Mammary epithelial cell (primary cell): ENCODE measurements at regions of chr10 and their contacts with region 1.

Region 1: DNA sequence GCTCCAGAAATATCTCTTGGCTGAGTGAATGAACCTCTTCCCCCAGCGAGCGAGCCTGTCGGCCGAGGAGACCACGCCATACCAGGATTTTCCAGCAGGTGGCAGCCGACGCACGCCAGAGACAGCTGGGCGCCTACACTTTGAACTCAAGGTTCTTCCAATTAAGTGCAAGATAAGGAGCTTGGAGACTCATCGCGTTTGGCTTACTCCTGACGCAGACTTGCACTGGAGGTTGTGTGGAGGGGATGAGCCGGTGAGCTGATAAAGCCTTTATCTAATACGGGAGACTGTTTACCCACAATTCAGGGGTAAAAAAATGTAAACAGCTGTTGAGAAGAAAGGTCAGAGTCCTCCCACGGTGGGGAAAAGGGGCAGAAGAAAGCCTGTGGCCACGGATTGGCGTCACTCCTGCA is 45.9 kb upstream of the EMX2 start:
- DNase-seq: peak; percentile 80
- H3K4me3 ChIP-seq: no peak overlapping the region
- H3K27ac ChIP-seq: no peak overlapping the region
- H3K4me1 ChIP-seq: peaks cover 5% of the 10 kb centered on the region
- H3K27me3 ChIP-seq: peaks cover 5% of the 10 kb centered on the region
- CTCF ChIP-seq: peak; percentile 94 to 97

Region 2: DNA sequence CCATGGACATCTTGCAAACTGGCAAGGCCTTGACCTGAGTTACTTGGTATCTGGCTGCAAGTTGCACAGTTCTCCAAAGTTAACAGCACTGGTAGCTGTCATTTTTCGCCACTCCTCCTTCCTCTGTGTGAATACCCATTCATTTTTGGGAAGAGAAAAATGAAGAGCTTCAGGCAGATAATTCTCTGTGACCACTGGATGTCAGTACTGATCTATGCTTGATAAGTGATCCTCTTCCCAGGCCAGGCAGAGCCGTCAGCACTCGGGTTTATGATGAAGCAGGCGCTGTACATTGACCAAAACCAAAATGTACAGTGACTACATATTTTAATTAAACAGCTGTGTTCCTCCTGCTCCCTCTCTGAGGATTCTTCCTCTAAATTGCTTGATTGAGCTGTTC is 65.5 kb before region 1 on chr10:
- CTCF ChIA-PET with region 1: interaction called, 3 read pairs
- dilution Hi-C with region 1: no loop called
- in situ Hi-C with region 1: no loop called
- intact Hi-C with region 1: loop called (anchors 1 kb)
- DNase-seq: peak; percentile 60
- H3K4me3 ChIP-seq: no peak overlapping the region
- H3K27ac ChIP-seq: no peak overlapping the region
- H3K4me1 ChIP-seq: no peaks in the 10 kb centered on the region
- H3K27me3 ChIP-seq: no peaks in the 10 kb centered on the region
- CTCF ChIP-seq: peak; percentile 39 to 57

Region 3: DNA sequence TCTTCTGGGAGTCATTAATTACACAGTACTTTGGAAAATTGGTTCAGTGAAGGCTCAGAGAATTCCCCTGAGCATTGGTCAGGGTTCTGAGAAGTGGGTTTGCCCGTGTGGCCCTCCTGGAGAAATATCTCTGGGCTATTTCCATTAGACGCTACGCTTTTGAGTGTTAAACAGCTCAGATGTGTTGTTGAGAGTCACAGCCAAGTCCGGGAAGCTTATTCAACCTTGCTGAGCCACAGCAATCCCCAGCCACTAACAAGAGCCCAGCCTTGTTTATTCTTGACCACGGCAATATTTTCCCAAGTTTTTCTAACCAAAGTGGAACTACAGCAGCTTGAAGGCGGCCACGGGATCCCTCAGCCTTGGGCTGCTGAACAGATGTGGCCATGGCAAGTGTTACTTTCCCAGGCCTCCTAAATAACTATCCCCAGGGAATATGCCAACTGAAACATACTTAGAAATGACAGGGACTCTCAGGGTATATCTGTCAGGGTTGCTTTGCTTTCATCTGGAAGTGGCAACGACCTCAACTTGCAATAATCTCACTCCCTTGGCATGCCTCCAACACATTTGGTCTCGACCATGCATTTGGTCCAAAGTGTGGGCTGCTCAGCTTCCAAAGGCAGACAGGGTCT is 260.6 kb after region 1 on chr10:
- CTCF ChIA-PET with region 1: no interaction called
- dilution Hi-C with region 1: loop called (anchors 10 kb)
- in situ Hi-C with region 1: no loop called
- intact Hi-C with region 1: no loop called
- DNase-seq: no peak
- H3K4me3 ChIP-seq: no peak overlapping the region
- H3K27ac ChIP-seq: no peak overlapping the region
- H3K4me1 ChIP-seq: no peaks in the 10 kb centered on the region
- H3K27me3 ChIP-seq: peaks cover 2% of the 10 kb centered on the region
- CTCF ChIP-seq: no peak

Region 4: DNA sequence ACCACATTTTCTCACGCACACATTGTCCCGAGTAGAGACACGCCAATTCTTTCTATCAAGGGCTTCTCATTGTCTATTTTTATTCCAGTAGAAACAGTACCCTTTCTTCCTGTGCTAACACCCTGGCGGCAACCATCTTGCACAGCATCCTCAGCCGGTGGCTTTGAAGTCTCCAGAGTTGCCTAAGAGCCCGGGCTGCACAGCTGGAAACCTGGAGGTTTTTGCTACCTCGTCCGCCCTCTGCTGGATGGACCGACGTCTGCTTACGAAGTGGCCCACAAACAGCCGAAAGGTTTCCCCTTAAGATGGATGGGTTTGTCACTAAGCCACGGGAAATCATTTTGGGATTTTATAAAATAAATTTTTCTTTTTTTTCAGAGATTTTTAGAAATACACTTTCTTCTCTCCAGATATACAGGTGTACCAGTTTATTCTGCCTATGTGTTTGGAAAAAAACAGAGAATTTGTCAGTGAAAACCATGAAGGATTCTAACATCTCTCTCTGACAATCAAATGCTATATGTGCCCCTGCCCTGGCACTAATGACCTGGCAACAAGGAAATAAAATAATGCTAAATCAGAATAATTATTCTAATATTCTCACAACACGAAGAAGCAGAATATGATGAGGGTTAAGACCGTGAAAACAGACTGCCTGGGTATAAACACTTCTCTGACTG is 927.3 kb after region 1 on chr10:
- CTCF ChIA-PET with region 1: interaction called, 5 read pairs
- dilution Hi-C with region 1: no loop called
- in situ Hi-C with region 1: no loop called
- intact Hi-C with region 1: loop called (anchors 1 kb)
- DNase-seq: peak; percentile 79
- H3K4me3 ChIP-seq: no peak overlapping the region
- H3K27ac ChIP-seq: no peak overlapping the region
- H3K4me1 ChIP-seq: no peaks in the 10 kb centered on the region
- H3K27me3 ChIP-seq: peaks cover 2% of the 10 kb centered on the region
- CTCF ChIP-seq: peak; percentile 75 to 89

Region 5: DNA sequence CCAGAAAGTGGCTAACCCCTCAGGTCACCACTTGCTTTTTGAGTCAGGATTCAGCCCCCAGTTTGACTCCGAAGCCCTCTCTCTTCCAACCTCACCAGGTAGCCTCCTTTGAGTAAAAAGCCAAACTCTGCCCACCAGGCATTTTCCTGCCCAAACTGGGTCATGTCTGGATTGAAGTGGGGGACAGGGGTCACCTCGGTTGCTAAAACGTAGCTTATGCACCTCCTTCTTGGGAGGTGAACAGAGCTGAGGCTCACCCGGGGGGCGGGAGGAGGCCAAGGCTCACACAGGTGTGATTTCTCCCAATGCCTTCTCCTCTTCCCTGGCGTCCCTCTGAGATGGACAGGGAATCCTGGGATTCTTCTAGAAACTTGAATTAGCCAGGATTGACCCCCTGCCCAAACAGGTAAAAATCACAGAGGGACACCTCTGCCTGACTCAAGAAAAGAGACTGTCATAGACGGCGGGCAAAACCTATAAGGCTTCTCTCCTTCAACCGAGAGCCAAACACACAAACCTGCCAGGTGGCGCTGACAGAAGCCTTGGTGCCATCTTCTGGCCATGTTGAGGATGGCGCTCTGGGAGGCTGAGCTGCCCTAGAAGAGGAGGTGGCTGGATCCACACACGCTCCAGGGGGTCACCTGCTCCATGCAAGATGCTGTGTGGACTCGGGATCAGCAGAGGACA is 1047.2 kb after region 1 on chr10:
- CTCF ChIA-PET with region 1: no interaction called
- dilution Hi-C with region 1: no loop called
- in situ Hi-C with region 1: no loop called
- intact Hi-C with region 1: loop called (anchors 1 kb)
- DNase-seq: peak; percentile 58
- H3K4me3 ChIP-seq: no peak overlapping the region
- H3K27ac ChIP-seq: no peak overlapping the region
- H3K4me1 ChIP-seq: peaks cover 4% of the 10 kb centered on the region
- H3K27me3 ChIP-seq: no peaks in the 10 kb centered on the region
- CTCF ChIP-seq: peak; percentile 93 to 97